Cardiac septum (tissue), 1 donor: ENCODE measurements at regions of chr6 and their contacts with region 1.

Region 1: DNA sequence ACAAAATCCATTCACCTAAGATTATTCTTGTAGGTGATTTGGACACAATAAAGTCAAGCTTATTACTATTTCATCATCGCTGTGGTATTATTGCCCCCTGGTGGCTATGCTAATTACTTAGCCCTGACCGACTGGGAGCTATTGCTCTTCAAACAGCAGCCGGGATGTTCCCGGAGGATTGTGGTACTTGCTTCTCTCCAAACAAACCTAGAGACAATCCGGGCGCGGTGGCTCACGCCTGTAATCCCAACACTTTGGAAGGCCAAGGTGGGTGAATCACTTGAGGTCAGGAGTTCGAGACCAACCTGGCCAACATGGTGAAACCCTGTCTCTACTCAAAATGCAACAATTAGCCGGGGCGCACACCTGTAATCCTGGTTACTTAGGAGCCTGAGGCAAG is 15.4 kb upstream of the STMND1 start:
- DNase-seq: no peak

Region 2: GRCh38 chr6:16332175-16332542 is 754.3 kb before region 1 on chr6:
- intact Hi-C with region 1: loop called (anchors 5 kb)
- DNase-seq: peak; percentile 89

Region 3: GRCh38 chr6:16514249-16514648 is 572.2 kb before region 1 on chr6:
- intact Hi-C with region 1: loop called (anchors 10 kb)
- DNase-seq: no peak

Region 4: GRCh38 chr6:16956361-16956760 is 130.1 kb before region 1 on chr6:
- intact Hi-C with region 1: loop called (anchors 5 kb)
- DNase-seq: no peak